ENCODE measurements at regions of chr3 and their contacts with region 1.

Region 1: GRCh38 chr3:106176734-106177133 is 307.9 kb upstream of the CBLB start:
- DNase-seq: peak; percentile 74
- ATAC-seq: peak; percentile 89
- H3K4me3 Mint-ChIP-seq: peak overlapping the region; percentile 52
- H3K27ac Mint-ChIP-seq: peak overlapping the region; percentile 92
- H3K4me1 Mint-ChIP-seq: peaks cover 66% of the 10 kb centered on the region
- H3K27me3 Mint-ChIP-seq: no peaks in the 10 kb centered on the region

Region 2: DNA sequence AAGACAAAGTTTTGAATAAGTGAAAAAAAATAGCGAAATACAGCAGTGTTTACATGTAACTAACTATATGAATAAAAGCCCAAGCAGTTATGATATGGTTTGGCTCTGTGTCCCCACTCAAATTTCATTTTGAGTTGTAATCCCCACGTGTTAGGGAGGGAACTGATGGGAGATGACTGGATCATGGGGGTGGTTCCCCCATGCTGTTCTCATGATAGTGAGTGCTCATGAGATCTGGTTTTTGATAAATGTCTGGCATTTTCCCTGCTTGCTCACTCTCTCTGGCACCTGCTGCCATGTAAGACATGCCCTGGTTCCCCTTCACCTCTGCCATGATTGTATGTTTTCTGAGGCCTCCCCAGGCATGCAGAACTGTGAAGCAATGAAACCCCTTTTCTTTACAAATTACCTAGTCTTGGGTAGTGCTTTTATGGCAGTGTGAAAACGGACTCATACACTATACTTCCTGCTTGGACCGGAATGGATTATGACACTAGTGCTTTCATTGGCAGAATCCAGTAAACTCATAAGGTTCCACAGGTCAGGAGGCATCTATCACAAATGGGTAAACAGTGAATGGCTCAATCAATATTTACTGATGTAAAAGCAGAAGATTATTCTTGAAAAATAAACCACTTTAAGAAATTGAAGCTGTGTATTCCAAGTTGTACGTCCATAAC is 500.0 kb before region 1 on chr3:
- CTCF ChIA-PET with region 1: no interaction called
- POLR2A ChIA-PET with region 1: no interaction called
- intact Hi-C with region 1: loop called (anchors 2 kb)
- DNase-seq: peak; percentile 74
- ATAC-seq: peak; percentile 94
- H3K4me3 Mint-ChIP-seq: peak overlapping the region; percentile 27
- H3K27ac Mint-ChIP-seq: peak overlapping the region; percentile 87
- H3K4me1 Mint-ChIP-seq: peaks cover 27% of the 10 kb centered on the region
- H3K27me3 Mint-ChIP-seq: no peaks in the 10 kb centered on the region

Region 3: GRCh38 chr3:105836533-105836932 is 340.2 kb before region 1 on chr3:
- CTCF ChIA-PET with region 1: interaction called, 3 read pairs
- POLR2A ChIA-PET with region 1: no interaction called
- intact Hi-C with region 1: loop called in 1 of 2 experiments (anchors 2 kb)
- DNase-seq: peak; percentile 73
- ATAC-seq: peak; percentile 68
- H3K4me3 Mint-ChIP-seq: peak overlapping the region; percentile 15
- H3K27ac Mint-ChIP-seq: peak overlapping the region; percentile 81
- H3K4me1 Mint-ChIP-seq: peaks cover 80% of the 10 kb centered on the region
- H3K27me3 Mint-ChIP-seq: no peaks in the 10 kb centered on the region

Region 4: GRCh38 chr3:106206146-106206545 is 29.4 kb after region 1 on chr3:
- CTCF ChIA-PET with region 1: interaction called, 3 read pairs
- POLR2A ChIA-PET with region 1: no interaction called
- intact Hi-C with region 1: loop called (anchors 1 kb)
- DNase-seq: peak; percentile 31
- ATAC-seq: peak; percentile 67
- H3K4me3 Mint-ChIP-seq: peak overlapping the region; percentile 65
- H3K27ac Mint-ChIP-seq: peak overlapping the region; percentile 94
- H3K4me1 Mint-ChIP-seq: peaks cover 50% of the 10 kb centered on the region
- H3K27me3 Mint-ChIP-seq: no peaks in the 10 kb centered on the region

Region 5: DNA sequence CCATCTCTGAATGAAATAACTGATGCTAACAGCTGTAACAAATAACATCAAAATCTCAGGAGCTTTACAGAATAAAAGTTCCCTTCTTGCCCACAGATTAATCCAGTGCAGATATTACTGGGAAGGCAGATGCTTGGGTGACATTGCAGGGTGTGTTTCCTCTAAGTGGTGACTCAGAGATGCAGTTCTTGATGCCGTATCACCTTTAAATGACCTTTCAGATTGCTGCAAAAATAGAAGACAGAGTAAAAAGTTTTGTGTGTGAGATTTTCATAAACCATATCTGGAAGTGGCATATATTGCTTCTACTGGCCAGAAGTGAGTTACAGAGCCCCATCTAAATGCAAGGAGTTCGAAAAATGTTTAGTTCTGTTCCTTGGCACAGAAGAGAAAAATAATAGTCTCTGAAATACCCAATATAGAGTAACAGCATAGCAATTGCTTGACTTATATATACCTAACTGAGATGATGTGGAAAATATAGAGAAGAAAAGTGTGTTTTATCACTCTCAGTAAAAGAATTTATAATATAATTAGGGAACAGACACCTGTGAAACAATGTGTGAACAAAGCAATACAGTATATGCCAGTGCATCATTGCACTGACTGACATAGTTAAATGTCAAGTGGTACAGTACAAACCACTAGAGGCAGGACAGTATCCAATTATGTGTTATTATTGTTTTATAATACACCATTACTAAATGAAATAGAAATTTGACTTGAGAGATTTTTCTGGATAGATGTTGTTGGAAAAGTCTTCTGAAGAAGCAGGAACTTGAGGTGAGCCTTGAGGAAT is 122.8 kb after region 1 on chr3:
- CTCF ChIA-PET with region 1: no interaction called
- POLR2A ChIA-PET with region 1: no interaction called
- intact Hi-C with region 1: loop called in 1 of 2 experiments (anchors 1 kb)
- DNase-seq: peak; percentile 39
- ATAC-seq: peak; percentile 76
- H3K4me3 Mint-ChIP-seq: no peak overlapping the region
- H3K27ac Mint-ChIP-seq: no peak overlapping the region
- H3K4me1 Mint-ChIP-seq: peaks cover 53% of the 10 kb centered on the region
- H3K27me3 Mint-ChIP-seq: no peaks in the 10 kb centered on the region

Region 6: DNA sequence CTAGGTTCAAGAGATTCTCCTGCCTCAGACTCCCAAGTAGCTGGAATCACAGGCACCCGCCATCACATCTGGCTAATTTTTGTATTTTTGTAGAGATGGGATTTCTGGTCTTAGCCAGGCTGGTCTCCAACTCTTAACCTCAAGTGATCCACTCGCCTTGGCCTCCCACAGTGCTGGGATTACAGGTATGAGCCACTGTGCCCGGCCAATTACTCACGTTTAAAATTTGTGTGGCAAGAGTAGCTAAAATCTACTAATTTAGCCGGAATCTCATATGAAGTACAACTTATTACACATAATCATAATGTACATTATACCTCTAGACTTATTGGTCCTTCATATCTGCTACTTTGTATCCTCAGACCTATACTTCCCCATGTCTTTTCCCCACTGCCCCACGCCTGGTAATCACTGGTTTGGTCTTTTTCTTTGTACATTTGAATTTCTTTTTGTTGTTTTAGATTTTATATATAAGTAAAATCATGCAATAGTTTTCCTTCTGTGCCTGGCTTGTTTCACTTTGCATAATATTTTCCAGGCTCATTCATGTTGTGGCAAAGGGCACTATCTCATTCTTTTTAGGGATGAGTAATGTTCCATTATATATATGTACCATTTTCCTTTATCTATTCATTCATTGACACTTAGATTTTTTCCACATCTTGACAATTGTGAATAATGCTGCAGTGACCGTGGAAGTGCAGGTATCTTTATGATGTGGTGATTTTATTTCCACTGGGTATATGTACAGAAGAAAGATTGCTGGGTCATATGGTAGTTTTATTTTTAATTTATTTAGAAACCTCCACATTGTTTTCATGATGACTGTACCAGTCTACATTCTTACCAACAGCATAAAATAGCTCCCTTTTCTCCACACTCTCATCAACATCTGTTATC is 297.1 kb after region 1 on chr3:
- CTCF ChIA-PET with region 1: no interaction called
- POLR2A ChIA-PET with region 1: no interaction called
- intact Hi-C with region 1: loop called (anchors 1 kb)
- DNase-seq: peak; percentile 47
- ATAC-seq: peak; percentile 86
- H3K4me3 Mint-ChIP-seq: no peak overlapping the region
- H3K27ac Mint-ChIP-seq: peak overlapping the region; percentile 88
- H3K4me1 Mint-ChIP-seq: peaks cover 28% of the 10 kb centered on the region
- H3K27me3 Mint-ChIP-seq: no peaks in the 10 kb centered on the region

Region 7: GRCh38 chr3:106582151-106582550 is 405.4 kb after region 1 on chr3:
- CTCF ChIA-PET with region 1: no interaction called
- POLR2A ChIA-PET with region 1: no interaction called
- intact Hi-C with region 1: no loop called
- DNase-seq: no peak
- ATAC-seq: no peak
- H3K4me3 Mint-ChIP-seq: no peak overlapping the region
- H3K27ac Mint-ChIP-seq: no peak overlapping the region
- H3K4me1 Mint-ChIP-seq: no peaks in the 10 kb centered on the region
- H3K27me3 Mint-ChIP-seq: no peaks in the 10 kb centered on the region